BJ (cell line): ENCODE measurements at regions of chr22 and their contacts with region 1.

Region 1: GRCh38 chr22:49930739-49931412 is 12.4 kb downstream of the CRELD2 start:
- DNase-seq: peak; percentile 19
- H3K4me3 ChIP-seq: no peak overlapping the region
- H3K27me3 ChIP-seq: no peaks in the 10 kb centered on the region
- CTCF ChIP-seq: peak; percentile 65

Region 2: GRCh38 chr22:49992921-49993648 is 62.2 kb after region 1 on chr22:
- CTCF ChIA-PET with region 1: interaction called, 39 read pairs
- POLR2A ChIA-PET with region 1: no interaction called
- DNase-seq: no peak
- H3K4me3 ChIP-seq: no peak overlapping the region
- H3K27me3 ChIP-seq: no peaks in the 10 kb centered on the region
- CTCF ChIP-seq: peak; percentile 85

Region 3: GRCh38 chr22:50012716-50013181 is 81.9 kb after region 1 on chr22 and contains the start of gene IL17REL:
- CTCF ChIA-PET with region 1: interaction called, 13 read pairs
- POLR2A ChIA-PET with region 1: no interaction called
- DNase-seq: no peak
- H3K4me3 ChIP-seq: no peak within 1 kb of the TSS
- H3K27me3 ChIP-seq: peaks cover 37% of the 10 kb centered on the region
- CTCF ChIP-seq: peak; percentile 33
- polyA plus RNA-seq, gene IL17REL: not detected in 2 replicates

Region 4: GRCh38 chr22:50112151-50113118 is 181.6 kb after region 1 on chr22:
- CTCF ChIA-PET with region 1: no interaction called
- POLR2A ChIA-PET with region 1: no interaction called
- DNase-seq: no peak
- H3K4me3 ChIP-seq: no peak overlapping the region
- H3K27me3 ChIP-seq: no peaks in the 10 kb centered on the region
- CTCF ChIP-seq: no peak

Region 5: DNA sequence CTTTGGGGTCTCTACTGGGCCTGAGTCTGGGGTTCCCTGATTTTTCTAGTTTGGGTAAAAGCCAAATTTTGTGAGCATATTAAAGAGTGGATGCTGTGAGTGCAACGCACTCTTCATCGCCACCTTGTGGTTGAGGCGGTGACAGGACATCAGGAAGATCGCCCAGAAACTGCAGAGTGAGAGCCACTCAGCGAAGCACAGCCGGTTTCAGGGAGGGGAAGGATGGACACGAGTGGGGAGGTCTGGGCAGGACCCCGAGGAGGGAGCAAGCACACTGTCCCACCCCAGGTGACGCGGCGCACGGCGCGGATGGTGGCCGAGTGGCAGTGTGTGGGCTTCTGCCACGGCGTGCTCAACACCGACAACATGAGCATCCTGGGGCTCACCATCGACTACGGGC is 279.0 kb after region 1 on chr22:
- CTCF ChIA-PET with region 1: interaction called, 10 read pairs
- POLR2A ChIA-PET with region 1: no interaction called
- DNase-seq: no peak
- H3K4me3 ChIP-seq: no peak overlapping the region
- H3K27me3 ChIP-seq: no peaks in the 10 kb centered on the region
- CTCF ChIP-seq: peak; percentile 89